Activated CD8-positive, alpha-beta T cell treated with anti-CD3 and anti-CD28 coated beads, Interleukin-2, amount 10 ng/mL, durations not matched to agents 7 days and 5 days (primary cell): ENCODE measurements at regions of chr1 and their contacts with region 1.

Region 1: GRCh38 chr1:160681067-160681890 is 30.3 kb downstream of the CD48 start:
- DNase-seq: peak; percentile 93
- ATAC-seq: peak; percentile 78
- H3K4me3 Mint-ChIP-seq: no peak overlapping the region
- H3K27ac Mint-ChIP-seq: peak overlapping the region; percentile 88
- H3K4me1 Mint-ChIP-seq: peaks cover 85% of the 10 kb centered on the region
- H3K27me3 Mint-ChIP-seq: no peaks in the 10 kb centered on the region

Region 2: DNA sequence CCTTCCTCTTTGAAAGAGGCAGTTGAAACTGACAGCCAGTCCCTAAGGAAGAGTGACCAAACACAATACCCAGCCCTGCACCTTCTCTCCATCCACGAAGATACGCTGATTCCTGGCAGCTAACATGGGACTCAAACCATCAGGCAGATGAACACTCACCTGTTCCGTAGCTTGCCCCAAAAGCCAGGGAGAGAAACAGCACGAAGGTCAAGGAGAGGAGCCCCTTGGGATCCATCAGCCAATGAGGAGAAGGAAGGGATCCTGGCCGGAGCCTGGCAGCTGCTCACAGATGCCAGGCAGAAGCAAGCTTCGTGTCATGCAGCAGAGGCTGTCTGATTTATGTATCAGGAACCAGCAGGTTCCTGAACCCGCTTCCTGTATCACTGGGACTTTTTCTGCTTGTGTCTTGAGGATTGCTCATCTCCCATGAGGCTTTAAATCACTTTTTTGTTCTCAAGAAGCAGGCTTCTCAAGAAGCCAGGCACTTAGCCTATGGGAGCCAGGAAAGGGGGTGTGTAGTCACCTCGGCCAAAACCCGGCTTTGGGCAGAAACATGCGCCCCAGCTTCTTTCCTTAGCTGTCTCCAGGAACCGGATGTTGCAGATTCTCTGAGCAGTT is 34.5 kb before region 1 on chr1 and contains the start of gene SLAMF1:
- CTCF ChIA-PET with region 1: interaction called, 65 read pairs
- POLR2A ChIA-PET with region 1: interaction called, 4 read pairs
- DNase-seq: peak; percentile 55
- ATAC-seq: peak; percentile 53
- H3K4me3 Mint-ChIP-seq: peak within 1 kb of the TSS; percentile 87
- H3K27ac Mint-ChIP-seq: peak within 1 kb of the TSS; percentile 82
- H3K4me1 Mint-ChIP-seq: peaks cover 63% of the 10 kb centered on the region
- H3K27me3 Mint-ChIP-seq: no peaks in the 10 kb centered on the region
- total RNA-seq, gene SLAMF1: 48.5 to 50.1 TPM

Region 3: DNA sequence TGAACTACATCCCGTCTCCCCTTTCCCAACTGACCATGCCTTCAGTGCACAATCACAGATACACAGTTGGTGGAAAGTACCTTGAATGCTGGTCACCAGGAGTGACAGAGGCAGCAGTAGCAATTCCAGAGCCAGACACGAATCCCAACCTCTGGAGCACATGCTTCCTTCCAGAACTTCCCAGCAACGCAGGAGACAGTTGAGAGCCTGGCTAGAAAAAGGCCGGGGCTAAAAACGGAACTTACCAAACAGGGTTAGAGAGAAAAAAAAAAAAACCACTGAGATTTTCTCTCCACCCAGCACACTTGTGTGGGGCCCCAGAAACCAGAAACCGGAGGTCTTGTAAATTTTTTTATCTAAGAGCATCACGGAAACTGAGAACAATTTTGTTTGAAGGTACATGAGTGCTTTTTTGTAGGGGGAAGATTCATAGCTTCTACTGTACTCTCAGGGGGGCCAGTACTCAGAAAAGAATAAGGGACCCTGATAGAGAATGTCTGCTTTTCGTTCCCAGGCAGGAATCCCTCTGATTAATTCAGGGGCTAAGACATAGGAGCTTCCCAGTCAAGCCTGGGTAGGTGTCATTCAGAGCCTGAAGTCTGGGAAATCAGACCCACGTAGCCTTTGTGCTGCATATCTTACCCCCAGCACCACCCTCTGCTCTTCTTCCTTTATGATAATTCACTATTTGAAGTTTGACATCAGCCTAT is 30.5 kb after region 1 on chr1 and contains the start of gene CD48:
- CTCF ChIA-PET with region 1: interaction called, 105 read pairs
- POLR2A ChIA-PET with region 1: interaction called, 51 read pairs
- DNase-seq: peak; percentile 79
- ATAC-seq: peak; percentile 48
- H3K4me3 Mint-ChIP-seq: no peak within 1 kb of the TSS
- H3K27ac Mint-ChIP-seq: no peak within 1 kb of the TSS
- H3K4me1 Mint-ChIP-seq: peaks cover 39% of the 10 kb centered on the region
- H3K27me3 Mint-ChIP-seq: no peaks in the 10 kb centered on the region
- total RNA-seq, gene CD48: 325 to 327 TPM

Region 4: DNA sequence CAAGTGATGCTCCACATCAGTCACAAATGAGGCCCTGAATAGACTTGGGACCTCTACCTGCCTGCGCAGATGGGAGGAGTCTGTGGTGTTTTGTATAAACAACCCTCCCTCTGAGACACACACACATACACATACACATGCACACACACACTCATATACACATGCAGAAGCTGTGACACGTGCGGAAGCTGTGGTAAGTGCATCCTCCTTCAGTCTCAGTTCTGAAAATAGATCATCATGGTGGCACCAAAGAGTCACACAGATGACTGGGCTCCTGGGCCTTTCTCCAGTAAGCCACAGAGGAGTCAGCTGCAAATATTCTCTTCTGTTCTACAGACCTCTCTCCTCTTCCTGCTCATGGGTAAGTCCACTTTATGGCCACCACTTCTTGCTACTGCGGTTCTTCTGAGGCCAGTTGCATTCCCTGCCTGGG is 114.7 kb after region 1 on chr1 and contains the start of gene LY9:
- CTCF ChIA-PET with region 1: interaction called, 29 read pairs
- POLR2A ChIA-PET with region 1: no interaction called
- DNase-seq: peak; percentile 89
- ATAC-seq: peak; percentile 85
- H3K4me3 Mint-ChIP-seq: peak within 1 kb of the TSS; percentile 88
- H3K27ac Mint-ChIP-seq: peak within 1 kb of the TSS; percentile 95
- H3K4me1 Mint-ChIP-seq: peaks cover 62% of the 10 kb centered on the region
- H3K27me3 Mint-ChIP-seq: no peaks in the 10 kb centered on the region
- total RNA-seq, gene LY9: 24.7 to 24.9 TPM

Region 5: DNA sequence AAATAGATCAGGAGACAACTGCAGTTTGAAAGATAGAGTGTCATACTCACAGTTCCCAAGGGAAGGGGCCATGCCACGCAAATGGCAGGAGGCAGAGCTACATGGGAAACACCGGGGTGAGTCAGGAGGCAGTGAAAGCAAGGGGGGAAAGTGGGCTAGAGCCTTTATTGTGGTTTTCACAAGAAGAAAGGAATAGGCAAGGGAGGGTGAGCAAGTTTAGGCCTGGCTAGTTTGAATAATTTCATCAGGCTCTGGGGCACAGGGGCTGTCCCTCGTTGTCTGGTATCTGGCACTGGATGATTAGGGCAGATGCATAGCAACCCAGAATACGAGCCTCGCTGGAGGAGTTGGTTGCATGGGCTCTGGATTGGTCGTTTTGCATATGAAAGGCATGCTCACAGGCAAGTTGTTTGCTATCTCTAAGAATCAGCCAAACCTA is 290.4 kb after region 1 on chr1:
- CTCF ChIA-PET with region 1: no interaction called
- POLR2A ChIA-PET with region 1: no interaction called
- DNase-seq: no peak
- ATAC-seq: no peak
- H3K4me3 Mint-ChIP-seq: no peak overlapping the region
- H3K27ac Mint-ChIP-seq: no peak overlapping the region
- H3K4me1 Mint-ChIP-seq: peaks cover 6% of the 10 kb centered on the region
- H3K27me3 Mint-ChIP-seq: peaks cover 12% of the 10 kb centered on the region